ENCODE measurements at regions of chr10 and their contacts with region 1.

Region 1: GRCh38 chr10:98467506-98468346 is 21.0 kb upstream of the HPS1 start:
- DNase-seq: peak; percentile 77 to 88 (median 80)
- ATAC-seq: peak; percentile 91
- H3K4me3 ChIP-seq: no peak overlapping the region
- H3K27ac ChIP-seq: peak overlapping the region; percentile 82
- H3K4me1 ChIP-seq: peaks cover 33 to 40% of the 10 kb centered on the region in 2 experiments; a peak in 4 of 5 replicates
- H3K27me3 ChIP-seq: no peaks in the 10 kb centered on the region
- CTCF ChIP-seq: peak; percentile 76 to 82 (median 81)
- EP300 ChIP-seq: no peak
- POLR2A ChIP-seq: no peak
- RAD21 ChIP-seq: peak; percentile 83 to 87

Region 2: DNA sequence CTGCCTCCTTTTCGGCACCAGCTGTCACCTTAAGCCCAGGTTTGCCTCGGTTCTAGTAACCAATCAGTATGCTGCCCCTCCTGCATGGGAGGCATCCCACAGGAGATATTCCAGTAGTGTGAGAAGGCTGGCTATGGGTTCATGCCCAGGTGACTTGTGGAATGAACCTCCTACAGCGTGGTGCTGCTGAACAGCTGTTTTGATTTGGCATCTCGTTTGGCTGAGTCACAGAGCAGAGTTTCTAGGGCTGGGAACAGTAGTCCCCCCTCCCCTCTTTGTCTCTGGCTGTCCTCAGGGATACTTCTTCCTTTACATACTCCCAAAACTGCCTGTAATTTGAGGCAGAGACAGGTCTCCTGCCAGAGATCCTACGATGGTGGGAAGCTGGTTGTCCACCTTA is 317.2 kb before region 1 on chr10:
- CTCF ChIA-PET with region 1: no interaction called
- POLR2A ChIA-PET with region 1: no interaction called
- in situ Hi-C with region 1: no loop called
- intact Hi-C with region 1: no loop called
- DNase-seq: no peak
- ATAC-seq: no peak
- H3K4me3 ChIP-seq: no peak overlapping the region
- H3K27ac ChIP-seq: no peak overlapping the region
- H3K4me1 ChIP-seq: no peaks in the 10 kb centered on the region
- H3K27me3 ChIP-seq: no peaks in the 10 kb centered on the region
- CTCF ChIP-seq: no peak
- EP300 ChIP-seq: no peak
- POLR2A ChIP-seq: no peak
- RAD21 ChIP-seq: no peak

Region 3: GRCh38 chr10:98425511-98426352 is 42.0 kb before region 1 on chr10:
- CTCF ChIA-PET with region 1: interaction called, 4 read pairs
- POLR2A ChIA-PET with region 1: interaction called, 4 read pairs
- in situ Hi-C with region 1: no loop called
- intact Hi-C with region 1: loop called (anchors 1 kb)
- DNase-seq: peak; percentile 45 to 62 (median 58)
- ATAC-seq: peak; percentile 93
- H3K4me3 ChIP-seq: no peak overlapping the region
- H3K27ac ChIP-seq: no peak overlapping the region
- H3K4me1 ChIP-seq: peaks cover 0 to 9% of the 10 kb centered on the region in 2 experiments; a peak in 1 of 5 replicates
- H3K27me3 ChIP-seq: no peaks in the 10 kb centered on the region
- CTCF ChIP-seq: peak; percentile 64 to 79 (median 67)
- EP300 ChIP-seq: no peak
- POLR2A ChIP-seq: no peak
- RAD21 ChIP-seq: peak; percentile 45 to 64

Region 4: DNA sequence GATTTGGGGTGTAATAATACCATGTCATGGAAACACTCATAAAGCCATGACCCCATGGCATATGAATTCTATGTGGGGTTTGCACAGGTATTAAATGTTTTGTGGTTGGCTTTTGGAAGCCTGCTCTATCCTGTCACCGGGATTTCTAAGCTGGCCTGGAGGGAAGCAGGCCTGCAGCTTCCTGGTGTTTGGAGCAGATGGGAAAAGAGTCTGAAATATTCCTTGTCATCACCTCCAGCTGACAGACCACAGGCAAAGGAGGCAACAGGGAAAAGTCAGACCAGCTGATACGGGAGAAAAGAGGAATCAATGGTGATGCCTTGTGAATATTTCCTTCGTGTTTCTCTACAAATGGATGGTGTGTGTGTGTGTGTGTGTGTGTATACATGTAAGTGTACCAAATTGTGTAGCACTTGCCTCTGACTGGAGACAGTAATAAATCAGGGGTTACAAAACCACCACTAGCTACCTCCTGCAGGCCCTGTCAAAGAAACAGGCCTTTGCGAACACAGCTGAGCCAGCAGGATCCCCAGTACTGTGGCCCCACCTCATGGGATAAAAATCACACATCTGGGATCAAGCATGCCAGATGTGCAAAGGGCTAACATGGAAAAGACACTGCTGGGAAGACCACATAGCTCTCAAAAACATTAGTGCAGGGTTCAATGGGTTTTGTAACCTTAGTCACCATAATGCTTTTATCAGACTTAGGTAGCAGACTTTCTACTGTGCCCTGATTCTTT is 99.8 kb after region 1 on chr10:
- CTCF ChIA-PET with region 1: no interaction called
- POLR2A ChIA-PET with region 1: no interaction called
- in situ Hi-C with region 1: no loop called
- intact Hi-C with region 1: no loop called
- DNase-seq: no peak
- ATAC-seq: no peak
- H3K4me3 ChIP-seq: no peak overlapping the region
- H3K27ac ChIP-seq: no peak overlapping the region
- H3K4me1 ChIP-seq: no peaks in the 10 kb centered on the region
- H3K27me3 ChIP-seq: no peaks in the 10 kb centered on the region
- CTCF ChIP-seq: no peak
- EP300 ChIP-seq: no peak
- POLR2A ChIP-seq: no peak
- RAD21 ChIP-seq: no peak

Region 5: DNA sequence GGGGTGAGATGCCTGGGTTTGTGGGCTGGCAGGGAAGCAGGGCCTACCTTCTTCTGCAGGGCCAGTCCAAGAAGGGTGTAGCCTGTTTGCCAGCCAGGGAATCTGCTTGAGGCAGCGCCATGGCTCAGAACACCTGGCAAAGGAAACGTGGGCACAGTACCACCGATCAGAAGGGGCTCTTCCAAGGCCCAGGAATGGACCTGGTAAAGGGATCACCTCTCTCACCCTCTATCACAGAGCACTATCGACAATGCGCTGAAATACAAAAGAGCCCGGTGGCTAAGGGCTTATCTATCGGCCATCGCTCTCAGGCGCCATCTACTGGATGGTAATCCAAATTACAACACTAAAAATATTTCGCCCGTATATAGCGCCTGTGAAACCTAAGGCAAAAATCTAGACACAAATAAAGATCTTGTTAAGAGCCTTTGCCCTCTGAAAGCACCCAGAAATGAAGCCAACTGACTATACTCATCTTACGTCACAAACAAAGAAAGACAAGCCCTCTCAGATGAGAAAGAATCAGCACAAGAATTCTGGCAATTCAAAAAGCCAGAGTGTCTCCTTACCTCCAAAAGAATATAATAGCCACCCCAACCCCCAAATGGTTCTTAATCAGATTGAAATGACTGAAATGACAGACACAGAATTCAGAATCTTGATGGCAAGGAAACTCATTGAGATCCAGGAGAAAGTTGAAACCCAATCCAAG is 196.8 kb after region 1 on chr10:
- CTCF ChIA-PET with region 1: interaction called, 4 read pairs
- POLR2A ChIA-PET with region 1: no interaction called
- in situ Hi-C with region 1: no loop called
- intact Hi-C with region 1: loop called (anchors 1 kb)
- DNase-seq: peak; percentile 50 to 58 (median 54)
- ATAC-seq: peak; percentile 74
- H3K4me3 ChIP-seq: no peak overlapping the region
- H3K27ac ChIP-seq: no peak overlapping the region
- H3K4me1 ChIP-seq: no peaks in the 10 kb centered on the region
- H3K27me3 ChIP-seq: no peaks in the 10 kb centered on the region
- CTCF ChIP-seq: peak; percentile 68 to 72 (median 69)
- EP300 ChIP-seq: no peak
- POLR2A ChIP-seq: no peak
- RAD21 ChIP-seq: peak; percentile 42 to 75

Region 6: GRCh38 chr10:98748298-98748697 is 280.6 kb after region 1 on chr10:
- CTCF ChIA-PET with region 1: no interaction called
- POLR2A ChIA-PET with region 1: no interaction called
- in situ Hi-C with region 1: no loop called
- intact Hi-C with region 1: loop called (anchors 10 kb)
- DNase-seq: peak; percentile 28 to 73 (median 33)
- ATAC-seq: peak; percentile 74
- H3K4me3 ChIP-seq: no peak overlapping the region
- H3K27ac ChIP-seq: no peak overlapping the region
- H3K4me1 ChIP-seq: no peaks in the 10 kb centered on the region
- H3K27me3 ChIP-seq: no peaks in the 10 kb centered on the region
- CTCF ChIP-seq: peak; percentile 38 to 50 (median 41); a peak in 5 of 6 replicates
- EP300 ChIP-seq: no peak
- POLR2A ChIP-seq: no peak
- RAD21 ChIP-seq: peak; percentile 56 to 79

Region 7: GRCh38 chr10:98916526-98917120 is 448.9 kb after region 1 on chr10:
- CTCF ChIA-PET with region 1: no interaction called
- POLR2A ChIA-PET with region 1: no interaction called
- in situ Hi-C with region 1: no loop called
- intact Hi-C with region 1: loop called (anchors 10 kb)
- DNase-seq: peak in 2 of 4 experiments; percentile 25 to 44
- ATAC-seq: peak; percentile 69
- H3K4me3 ChIP-seq: no peak overlapping the region
- H3K27ac ChIP-seq: no peak overlapping the region
- H3K4me1 ChIP-seq: peaks cover 7 to 39% of the 10 kb centered on the region in 2 experiments; a peak in 4 of 5 replicates
- H3K27me3 ChIP-seq: no peaks in the 10 kb centered on the region
- CTCF ChIP-seq: peak; percentile 18 to 46 (median 27); a peak in 3 of 6 replicates
- EP300 ChIP-seq: no peak
- POLR2A ChIP-seq: no peak
- RAD21 ChIP-seq: peak; percentile 25 to 59; a peak in 2 of 4 replicates

Region 8: DNA sequence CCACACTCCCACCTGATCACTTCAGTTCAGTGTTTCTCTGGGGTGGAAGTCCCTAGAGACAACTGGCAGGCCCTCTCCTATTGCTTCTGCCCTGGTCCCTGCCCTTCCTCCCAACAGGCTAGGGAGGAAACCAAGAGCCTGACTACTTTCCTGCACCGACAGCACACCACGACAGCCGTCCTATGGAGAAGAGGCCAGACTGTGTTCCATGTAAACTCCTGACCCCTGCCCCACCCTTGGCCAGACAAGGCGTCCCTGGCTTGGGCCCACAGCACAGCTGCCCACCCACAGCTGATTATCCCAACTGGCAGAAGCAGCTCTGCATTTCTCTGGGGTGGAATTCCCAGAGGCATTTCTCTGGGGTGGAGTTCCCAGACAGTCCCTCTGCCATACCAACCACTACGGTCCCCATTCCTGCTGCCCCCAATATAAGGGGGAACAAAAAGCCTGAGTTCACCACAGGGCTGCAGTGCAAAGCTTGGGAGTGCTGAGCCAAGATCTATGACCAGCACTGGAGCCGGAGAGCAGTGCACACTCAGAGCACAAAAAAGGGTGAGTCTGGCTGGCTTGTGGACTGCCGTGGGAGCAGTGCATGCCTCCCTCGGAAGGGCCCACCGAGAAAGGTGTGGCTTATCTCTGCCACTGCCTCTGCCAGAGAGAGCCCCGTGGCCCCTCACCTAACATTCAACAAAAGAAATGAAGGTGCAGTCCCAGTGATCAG is 574.5 kb after region 1 on chr10:
- CTCF ChIA-PET with region 1: interaction called, 3 read pairs
- POLR2A ChIA-PET with region 1: no interaction called
- in situ Hi-C with region 1: loop called (anchors 10 kb)
- intact Hi-C with region 1: loop called (anchors 1 kb)
- DNase-seq: no peak
- ATAC-seq: peak; percentile 32; the same call in 2 of the 3 replicates
- H3K4me3 ChIP-seq: no peak overlapping the region
- H3K27ac ChIP-seq: no peak overlapping the region; the same call in 2 of the 3 replicates
- H3K4me1 ChIP-seq: peaks cover 0 to 5% of the 10 kb centered on the region in 2 experiments; a peak in 1 of 5 replicates
- H3K27me3 ChIP-seq: no peaks in the 10 kb centered on the region
- CTCF ChIP-seq: no peak
- EP300 ChIP-seq: no peak
- POLR2A ChIP-seq: no peak
- RAD21 ChIP-seq: no peak

Region 9: DNA sequence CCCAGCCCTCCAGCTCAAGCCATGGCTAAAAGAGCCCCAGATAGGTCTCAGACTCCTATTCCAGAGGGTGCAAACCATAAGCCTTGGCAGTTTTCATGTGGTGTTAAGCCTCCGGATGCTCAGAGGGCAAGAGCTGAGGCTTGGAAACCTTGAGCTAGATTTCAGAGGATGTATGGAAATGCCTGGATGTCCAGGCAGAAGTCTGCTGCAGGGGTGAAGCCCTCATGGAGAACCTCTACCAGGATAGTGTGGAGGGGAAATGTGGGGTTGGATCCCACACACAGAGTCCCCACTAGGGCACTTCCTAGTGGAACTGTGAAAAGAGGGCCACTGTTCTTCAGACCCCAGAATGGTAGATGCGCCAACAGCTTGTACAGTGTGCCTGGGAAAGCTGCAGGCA is 781.1 kb after region 1 on chr10:
- CTCF ChIA-PET with region 1: interaction called, 8 read pairs
- POLR2A ChIA-PET with region 1: no interaction called
- in situ Hi-C with region 1: no loop called
- intact Hi-C with region 1: loop called (anchors 5 kb)
- DNase-seq: no peak
- ATAC-seq: no peak
- H3K4me3 ChIP-seq: no peak overlapping the region
- H3K27ac ChIP-seq: no peak overlapping the region
- H3K4me1 ChIP-seq: no peaks in the 10 kb centered on the region
- H3K27me3 ChIP-seq: no peaks in the 10 kb centered on the region
- CTCF ChIP-seq: no peak
- EP300 ChIP-seq: no peak
- POLR2A ChIP-seq: no peak
- RAD21 ChIP-seq: no peak

Measured in K562 (cell line).